GM10248 (cell line): ENCODE measurements at regions of chr17 and their contacts with region 1.

Region 1: DNA sequence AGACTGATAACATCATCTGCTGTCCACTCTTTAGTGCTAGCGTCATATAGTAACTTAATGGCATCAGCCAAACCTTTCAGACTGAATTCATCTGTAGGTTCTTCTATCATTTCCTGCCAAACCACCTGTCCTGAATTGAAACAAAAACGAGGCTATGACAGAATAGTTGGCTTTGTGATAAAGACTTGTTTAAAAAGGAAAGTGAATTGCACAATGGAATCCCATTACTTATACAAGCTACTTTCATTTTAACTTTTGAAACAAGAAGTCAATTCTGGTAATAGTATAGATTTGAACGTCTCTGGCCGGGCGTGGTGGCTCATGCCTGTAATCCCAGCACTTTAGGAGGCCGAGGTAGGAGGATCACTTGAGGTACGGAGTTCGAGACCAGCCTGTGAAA is 18.2 kb downstream of the LASP1NB start:
- DNase-seq: no peak
- CTCF ChIP-seq: no peak

Region 2: DNA sequence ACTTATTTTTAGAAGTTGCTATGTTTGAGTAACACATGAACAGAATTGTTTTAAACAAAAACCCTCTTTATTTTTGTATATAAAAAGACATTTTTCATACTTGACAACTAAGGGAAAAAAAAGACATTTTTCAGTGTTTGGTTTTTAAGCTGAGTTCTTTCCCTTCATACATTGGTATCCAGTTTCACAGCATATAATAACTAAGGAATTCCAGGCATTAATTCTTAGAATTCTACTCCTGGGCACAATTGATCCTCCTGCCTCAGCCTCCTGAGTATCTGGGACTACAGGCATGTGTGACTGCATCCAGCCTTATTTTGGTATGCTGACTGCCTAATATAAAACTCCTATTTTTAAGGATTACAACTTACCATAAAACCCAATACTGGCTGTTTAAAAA is 15.1 kb after region 1 on chr17:
- CTCF ChIA-PET with region 1: no interaction called
- POLR2A ChIA-PET with region 1: interaction called, 10 read pairs
- DNase-seq: no peak
- CTCF ChIP-seq: no peak